Vagina (tissue), 2 donors: ENCODE measurements at regions of chr2 and their contacts with region 1.

Region 1: DNA sequence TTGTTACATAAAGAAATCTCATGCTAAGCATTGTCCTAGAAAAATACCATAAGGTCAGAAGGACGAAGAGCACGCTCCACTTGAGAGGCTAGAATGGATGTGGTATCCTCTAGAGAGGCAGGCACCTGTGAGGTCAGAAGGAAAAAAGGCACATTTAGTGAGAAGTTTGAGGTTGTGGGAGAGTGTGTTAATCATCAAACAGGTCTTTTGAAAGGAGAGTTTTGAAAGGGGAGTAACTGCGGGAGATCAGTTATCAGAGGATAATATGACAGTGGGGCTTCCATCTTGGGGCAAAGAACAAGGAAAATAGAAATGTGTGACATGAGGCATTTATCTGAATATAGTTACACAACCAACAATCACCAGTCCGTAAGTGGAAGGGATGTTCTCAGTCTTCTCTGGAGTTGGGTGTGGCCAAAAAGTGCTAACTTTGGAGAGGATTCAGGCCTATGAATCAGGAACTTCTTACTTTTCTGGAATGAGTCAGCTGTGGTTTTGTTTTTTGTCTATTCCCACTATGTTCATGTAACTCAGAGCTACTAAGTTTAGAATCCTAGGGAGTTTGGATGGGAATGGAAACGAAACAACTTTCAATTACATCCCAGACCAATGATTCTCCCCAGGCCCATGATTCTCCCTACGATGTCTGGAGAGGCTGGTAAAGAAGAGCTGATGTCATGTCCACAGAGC is 451.4 kb upstream of the ST6GAL2 start:
- DNase-seq: no peak
- H3K4me3 ChIP-seq: no peak overlapping the region
- H3K27ac ChIP-seq: no peak overlapping the region
- H3K4me1 ChIP-seq: no peaks in the 10 kb centered on the region
- H3K27me3 ChIP-seq: no peaks in the 10 kb centered on the region
- CTCF ChIP-seq: no peak
- POLR2A ChIP-seq: no peak

Region 2: DNA sequence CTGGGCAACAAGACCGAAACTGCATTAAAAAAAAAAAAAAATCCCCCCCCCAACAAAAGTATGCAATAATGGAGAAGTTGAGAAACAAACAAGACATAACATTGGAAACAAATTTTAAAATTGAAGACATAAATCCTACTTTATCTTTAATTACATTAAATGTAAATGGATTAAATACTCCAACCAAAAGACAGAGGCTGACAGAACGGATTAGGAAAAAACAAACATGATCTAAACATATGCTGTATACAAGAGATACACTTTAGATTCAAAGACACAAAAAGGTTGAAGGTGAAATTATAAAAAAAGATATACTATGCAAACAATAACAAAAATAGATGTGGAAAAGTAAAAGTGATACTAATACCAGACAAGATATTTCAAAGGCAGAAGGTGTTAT is 138.5 kb after region 1 on chr2:
- intact Hi-C with region 1: no loop called
- DNase-seq: no peak
- H3K4me3 ChIP-seq: no peak overlapping the region
- H3K27ac ChIP-seq: no peak overlapping the region
- H3K4me1 ChIP-seq: no peaks in the 10 kb centered on the region
- H3K27me3 ChIP-seq: no peaks in the 10 kb centered on the region
- CTCF ChIP-seq: no peak
- POLR2A ChIP-seq: no peak

Region 3: DNA sequence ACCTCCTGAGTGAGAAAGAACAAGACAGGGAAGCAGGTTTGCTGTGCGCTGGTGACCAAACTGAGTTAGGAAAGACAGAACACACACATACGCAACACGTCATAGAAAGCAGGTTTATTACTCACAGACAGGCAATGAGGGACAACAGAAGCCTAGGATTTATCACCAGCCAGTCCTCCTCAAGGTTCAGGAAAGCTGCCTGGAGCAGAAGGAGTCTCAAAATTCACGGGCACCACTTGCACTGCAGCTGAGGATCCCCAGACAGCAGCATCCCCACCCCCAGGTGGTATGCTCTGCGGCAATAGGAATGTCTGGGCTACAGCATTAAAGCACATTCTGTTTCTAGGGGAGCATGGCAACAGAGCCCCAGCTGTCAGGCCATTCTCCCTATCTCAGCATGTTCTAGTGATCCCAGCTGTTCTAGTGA is 205.0 kb after region 1 on chr2:
- intact Hi-C with region 1: loop called (anchors 5 kb)
- DNase-seq: no peak
- H3K4me3 ChIP-seq: no peak overlapping the region
- H3K27ac ChIP-seq: no peak overlapping the region
- H3K4me1 ChIP-seq: no peaks in the 10 kb centered on the region
- H3K27me3 ChIP-seq: no peaks in the 10 kb centered on the region
- CTCF ChIP-seq: no peak
- POLR2A ChIP-seq: no peak